Body of pancreas (tissue), 4 donors: ENCODE measurements at regions of chr9 and their contacts with region 1.

Region 1: DNA sequence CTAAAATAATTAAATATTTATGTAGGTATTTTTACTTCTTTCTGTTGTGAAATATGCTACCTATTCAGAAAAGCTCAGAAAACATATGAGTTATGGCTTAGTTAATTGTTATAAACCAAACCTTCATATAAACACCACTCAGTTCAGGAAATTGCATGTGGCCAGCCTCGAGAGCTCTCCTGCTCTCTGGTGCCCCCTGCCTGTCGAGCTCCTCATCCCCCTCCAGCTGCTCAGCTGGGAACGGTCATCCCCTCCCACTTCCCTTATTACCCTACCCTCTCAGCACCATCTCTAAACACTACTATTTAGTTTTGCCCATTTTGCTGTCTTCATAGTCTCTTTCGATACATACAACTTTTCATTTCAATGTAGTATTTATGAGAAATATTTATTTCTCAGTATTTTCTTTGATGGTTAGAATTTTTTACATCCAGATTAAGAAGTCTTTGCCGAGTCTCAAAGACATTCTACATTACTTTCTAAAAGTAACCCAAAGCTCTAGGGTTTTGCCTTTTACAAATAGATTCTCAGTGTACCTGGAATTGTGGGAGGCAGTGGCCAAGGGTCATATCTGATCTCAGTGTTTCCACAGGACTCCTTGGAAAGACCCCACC is 51.2 kb upstream of the SEMA4D start:
- DNase-seq: peak; percentile 75 to 83 (median 78)
- ATAC-seq: peak; percentile 92
- H3K4me3 ChIP-seq: no peak overlapping the region
- H3K27ac ChIP-seq: no peak overlapping the region
- H3K4me1 ChIP-seq: no peaks in the 10 kb centered on the region
- H3K27me3 ChIP-seq: no peaks in the 10 kb centered on the region
- CTCF ChIP-seq: peak; percentile 62 to 89 (median 84)
- POLR2A ChIP-seq: no peak

Region 2: GRCh38 chr9:89247431-89248353 is 301.4 kb before region 1 on chr9:
- intact Hi-C with region 1: no loop called
- DNase-seq: no peak
- ATAC-seq: no peak
- H3K4me3 ChIP-seq: no peak overlapping the region
- H3K27ac ChIP-seq: no peak overlapping the region
- H3K4me1 ChIP-seq: no peaks in the 10 kb centered on the region
- H3K27me3 ChIP-seq: no peaks in the 10 kb centered on the region
- CTCF ChIP-seq: no peak
- POLR2A ChIP-seq: no peak

Region 3: GRCh38 chr9:89323390-89323789 is 225.7 kb before region 1 on chr9:
- intact Hi-C with region 1: loop called (anchors 10 kb)
- DNase-seq: no peak
- ATAC-seq: no peak
- H3K4me3 ChIP-seq: no peak overlapping the region
- H3K27ac ChIP-seq: no peak overlapping the region
- H3K4me1 ChIP-seq: peaks cover 50% of the 10 kb centered on the region
- H3K27me3 ChIP-seq: no peaks in the 10 kb centered on the region
- CTCF ChIP-seq: no peak
- POLR2A ChIP-seq: no peak

Region 4: DNA sequence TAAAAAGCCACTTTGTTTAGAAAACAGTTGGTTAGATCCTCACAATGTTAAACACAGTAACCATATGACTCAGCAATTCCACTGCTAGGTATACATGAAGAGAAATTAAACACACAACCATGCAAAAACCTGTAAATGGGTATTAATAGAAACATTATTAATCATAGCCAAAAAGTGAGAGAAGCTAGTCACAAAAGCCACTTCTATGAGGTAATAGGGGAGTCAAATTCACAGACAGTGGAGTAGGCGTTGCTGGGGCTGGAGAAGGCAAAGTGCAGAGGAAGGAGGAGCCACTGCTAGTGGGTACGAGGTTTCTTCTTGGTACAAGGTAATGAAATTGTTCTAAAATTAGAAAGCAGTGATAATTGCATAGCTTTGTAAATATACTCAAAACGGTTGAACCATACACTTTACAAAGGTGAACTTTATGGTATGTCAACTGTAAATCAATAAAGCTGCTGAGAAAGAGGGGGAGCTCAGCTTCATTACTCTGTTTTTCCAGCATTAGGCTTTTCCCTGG is 420.1 kb after region 1 on chr9:
- intact Hi-C with region 1: no loop called
- DNase-seq: peak in 1 of 4 donors; percentile 39
- ATAC-seq: peak; percentile 65
- H3K4me3 ChIP-seq: no peak overlapping the region
- H3K27ac ChIP-seq: no peak overlapping the region
- H3K4me1 ChIP-seq: peaks cover 6% of the 10 kb centered on the region
- H3K27me3 ChIP-seq: no peaks in the 10 kb centered on the region
- CTCF ChIP-seq: no peak
- POLR2A ChIP-seq: no peak